Left colon (tissue), 2 donors: ENCODE measurements at regions of chr10 and their contacts with region 1.

Region 1: GRCh38 chr10:30783939-30784500 is 154.5 kb upstream of the LYZL2 start:
- DNase-seq: peak; percentile 79 to 84
- ATAC-seq: peak; percentile 77

Region 2: GRCh38 chr10:30812018-30812851 is 28.2 kb after region 1 on chr10:
- intact Hi-C with region 1: no loop called
- DNase-seq: no peak
- ATAC-seq: peak; percentile 12

Region 3: GRCh38 chr10:31031558-31032257 is 247.7 kb after region 1 on chr10 and contains the start of gene ZNF438:
- intact Hi-C with region 1: loop called in 1 of 2 experiments (anchors 10 kb)
- DNase-seq: peak; percentile 91 to 96
- ATAC-seq: peak; percentile 94
- total RNA-seq, gene ZNF438: 3.8 to 6.5 TPM

Region 4: GRCh38 chr10:31437959-31438358 is 653.9 kb after region 1 on chr10:
- intact Hi-C with region 1: no loop called
- DNase-seq: no peak
- ATAC-seq: no peak

Region 5: DNA sequence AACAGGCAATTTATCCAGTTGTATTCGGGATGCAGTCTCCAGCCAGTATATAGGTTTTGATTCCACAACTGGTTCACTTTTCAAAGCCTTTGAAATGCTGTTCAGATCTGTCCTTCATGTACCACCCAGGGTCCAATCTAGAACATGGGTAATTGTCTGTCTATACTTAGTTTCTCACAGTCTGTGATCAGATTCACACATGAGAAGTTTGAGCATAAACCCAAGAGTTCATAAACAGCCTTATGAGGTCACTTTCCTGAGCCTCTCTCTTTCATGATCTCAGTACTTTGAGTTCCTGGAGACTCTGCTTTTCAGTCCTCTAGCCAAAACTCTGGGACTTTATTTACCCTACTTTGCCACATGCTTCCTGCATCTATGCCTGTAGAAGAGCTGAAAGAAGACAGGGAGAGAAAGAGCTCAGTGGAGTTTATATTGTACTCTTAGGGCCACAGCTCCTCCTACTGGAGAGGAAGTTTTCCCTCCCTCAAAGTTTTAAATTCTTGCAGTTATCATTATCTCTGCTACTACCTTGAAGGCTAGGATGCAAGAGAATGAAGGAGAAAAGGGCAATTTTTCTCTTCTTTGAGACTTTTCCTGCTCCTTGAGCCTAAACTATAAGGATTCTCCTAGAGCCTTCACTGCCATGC is 707.0 kb after region 1 on chr10:
- intact Hi-C with region 1: loop called in 1 of 2 experiments (anchors 5 kb)
- DNase-seq: no peak
- ATAC-seq: peak; percentile 40